Calu3 (cell line): ENCODE measurements at regions of chr12 and their contacts with region 1.

Region 1: GRCh38 chr12:105382771-105383622 is 52.5 kb downstream of the C12orf75 start:
- DNase-seq: peak; percentile 63
- H3K4me3 Mint-ChIP-seq: no peak overlapping the region
- H3K27ac Mint-ChIP-seq: no peak overlapping the region
- H3K4me1 Mint-ChIP-seq: no peaks in the 10 kb centered on the region
- H3K27me3 Mint-ChIP-seq: no peaks in the 10 kb centered on the region
- CTCF ChIP-seq: peak; percentile 54

Region 2: GRCh38 chr12:105171691-105172436 is 211.1 kb before region 1 on chr12:
- CTCF ChIA-PET with region 1: no interaction called
- intact Hi-C with region 1: loop called (anchors 10 kb)
- DNase-seq: no peak
- H3K4me3 Mint-ChIP-seq: no peak overlapping the region
- H3K27ac Mint-ChIP-seq: no peak overlapping the region
- H3K4me1 Mint-ChIP-seq: no peaks in the 10 kb centered on the region
- H3K27me3 Mint-ChIP-seq: no peaks in the 10 kb centered on the region
- CTCF ChIP-seq: no peak

Region 3: DNA sequence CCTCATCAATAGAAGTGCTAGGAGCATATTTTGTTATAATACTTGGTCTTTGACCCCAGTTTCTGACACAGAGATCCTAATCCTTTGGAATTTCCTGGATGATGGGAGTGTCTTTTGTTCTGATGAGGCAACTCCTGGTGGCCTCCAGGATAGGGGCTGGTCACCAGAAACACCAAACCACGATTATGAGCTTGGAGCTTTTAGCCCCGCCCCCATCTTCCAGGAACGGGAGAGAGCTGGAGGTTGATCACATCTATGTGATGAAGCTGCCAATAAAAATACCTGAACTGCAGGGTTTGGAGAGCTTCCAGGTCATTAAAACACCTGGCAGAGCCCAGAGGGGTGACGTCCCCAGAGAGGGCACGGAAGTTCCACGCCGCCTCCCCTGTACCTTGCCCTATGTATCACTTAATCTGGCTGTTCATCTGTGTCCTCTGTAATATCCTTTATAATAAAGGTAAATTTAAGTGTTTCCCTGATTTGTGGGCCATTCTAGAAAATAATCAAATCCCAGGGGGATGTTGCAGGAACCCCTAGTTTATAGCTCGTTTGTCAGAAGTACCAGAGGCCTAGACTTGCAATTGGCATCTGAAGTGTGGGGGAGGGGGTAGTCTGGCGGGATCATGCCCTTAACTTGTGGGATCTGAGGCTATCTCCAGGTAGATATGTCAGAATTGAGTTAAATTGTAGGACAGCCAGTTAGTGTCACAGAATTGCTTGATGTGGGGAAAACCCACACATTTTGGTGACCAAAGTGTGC is 168.2 kb before region 1 on chr12:
- CTCF ChIA-PET with region 1: interaction called, 5 read pairs
- intact Hi-C with region 1: loop called (anchors 1 kb)
- DNase-seq: peak; percentile 90
- H3K4me3 Mint-ChIP-seq: peak overlapping the region; percentile 13
- H3K27ac Mint-ChIP-seq: peak overlapping the region; percentile 68
- H3K4me1 Mint-ChIP-seq: peaks cover 20% of the 10 kb centered on the region
- H3K27me3 Mint-ChIP-seq: no peaks in the 10 kb centered on the region
- CTCF ChIP-seq: no peak

Region 4: GRCh38 chr12:105235732-105236476 is 147.1 kb before region 1 on chr12 and contains the start of gene APPL2:
- CTCF ChIA-PET with region 1: interaction called, 3 read pairs
- intact Hi-C with region 1: loop called (anchors 5 kb)
- DNase-seq: peak; percentile 92
- H3K4me3 Mint-ChIP-seq: peak within 1 kb of the TSS; percentile 80
- H3K27ac Mint-ChIP-seq: peak within 1 kb of the TSS; percentile 72
- H3K4me1 Mint-ChIP-seq: peaks cover 33% of the 10 kb centered on the region
- H3K27me3 Mint-ChIP-seq: no peaks in the 10 kb centered on the region
- CTCF ChIP-seq: peak; percentile 79
- total RNA-seq, gene APPL2: 35.9 and 45.8 TPM in 2 replicates

Region 5: DNA sequence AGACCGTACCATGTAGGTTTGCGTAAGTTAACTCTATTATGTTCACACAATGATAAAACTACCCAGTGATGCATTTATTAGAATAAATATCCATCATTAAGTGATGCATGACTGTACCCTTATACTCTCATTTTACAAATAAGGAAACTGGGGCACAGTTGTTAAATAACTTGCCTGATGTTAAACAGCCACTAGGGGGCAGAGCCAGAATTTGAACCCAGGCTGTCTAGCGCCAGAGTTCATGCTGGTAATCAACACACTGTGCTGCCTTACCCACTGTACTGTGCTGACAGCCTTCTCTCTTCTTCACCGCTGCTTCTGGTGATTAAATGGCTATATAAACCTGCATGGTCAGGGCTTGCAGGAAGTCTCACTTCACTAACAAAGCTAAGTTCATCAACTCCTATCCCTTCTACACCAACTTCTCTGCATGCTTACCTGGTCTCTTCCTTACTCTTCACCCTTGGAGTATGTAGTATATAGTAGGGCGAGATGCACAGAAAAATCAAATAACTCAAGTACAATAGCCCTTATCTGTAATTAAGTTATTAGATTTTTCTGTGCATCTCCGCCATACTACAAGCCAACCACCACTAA is 103.4 kb before region 1 on chr12:
- CTCF ChIA-PET with region 1: no interaction called
- intact Hi-C with region 1: loop called (anchors 1 kb)
- DNase-seq: peak; percentile 48
- H3K4me3 Mint-ChIP-seq: no peak overlapping the region
- H3K27ac Mint-ChIP-seq: no peak overlapping the region
- H3K4me1 Mint-ChIP-seq: peaks cover 47% of the 10 kb centered on the region
- H3K27me3 Mint-ChIP-seq: no peaks in the 10 kb centered on the region
- CTCF ChIP-seq: peak; percentile 69

Region 6: GRCh38 chr12:105317942-105318621 is 64.9 kb before region 1 on chr12:
- CTCF ChIA-PET with region 1: interaction called, 4 read pairs
- intact Hi-C with region 1: loop called (anchors 2 kb)
- DNase-seq: peak; percentile 40
- H3K4me3 Mint-ChIP-seq: peak overlapping the region; percentile 3
- H3K27ac Mint-ChIP-seq: peak overlapping the region; percentile 86
- H3K4me1 Mint-ChIP-seq: peaks cover 68% of the 10 kb centered on the region
- H3K27me3 Mint-ChIP-seq: no peaks in the 10 kb centered on the region
- CTCF ChIP-seq: no peak

Region 7: DNA sequence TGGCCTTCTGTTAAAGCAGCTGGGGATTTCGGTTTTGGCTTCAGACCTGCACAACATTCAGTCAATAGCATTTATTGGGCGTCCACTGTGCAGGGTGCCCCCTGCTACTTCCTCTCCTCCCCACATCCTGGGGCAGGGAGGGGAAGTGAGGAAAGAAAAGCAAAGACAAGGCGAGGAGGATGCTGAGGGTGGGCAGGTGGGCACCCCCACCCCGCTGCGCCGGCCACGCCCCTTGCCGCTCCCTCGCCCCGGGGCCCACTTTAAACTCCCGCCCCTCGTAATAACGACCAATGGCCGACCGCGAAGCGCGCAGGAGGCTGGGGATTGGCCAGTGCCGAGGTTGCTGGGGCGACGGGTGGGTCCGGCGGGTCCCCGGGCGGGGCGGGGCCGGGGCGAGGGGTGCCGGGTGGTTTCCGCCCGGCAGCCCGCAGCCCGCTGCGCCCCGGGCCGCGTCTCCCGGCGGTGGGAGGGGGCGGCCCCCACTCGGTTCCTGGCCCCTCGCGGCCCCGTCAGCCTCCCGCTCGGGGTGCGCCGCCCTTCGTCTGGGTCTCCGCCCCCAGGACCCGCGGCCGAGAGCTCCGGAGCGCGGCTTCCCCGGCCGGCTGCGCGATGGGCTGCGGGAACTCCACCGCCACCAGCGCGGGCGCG is 52.6 kb before region 1 on chr12 and contains the start of gene C12orf75:
- CTCF ChIA-PET with region 1: no interaction called
- intact Hi-C with region 1: loop called (anchors 5 kb)
- DNase-seq: peak; percentile 95
- H3K4me3 Mint-ChIP-seq: peak within 1 kb of the TSS; percentile 78
- H3K27ac Mint-ChIP-seq: peak within 1 kb of the TSS; percentile 92
- H3K4me1 Mint-ChIP-seq: peaks cover 74% of the 10 kb centered on the region
- H3K27me3 Mint-ChIP-seq: no peaks in the 10 kb centered on the region
- CTCF ChIP-seq: no peak
- total RNA-seq, gene C12orf75: 336 and 363 TPM in 2 replicates

Region 8: DNA sequence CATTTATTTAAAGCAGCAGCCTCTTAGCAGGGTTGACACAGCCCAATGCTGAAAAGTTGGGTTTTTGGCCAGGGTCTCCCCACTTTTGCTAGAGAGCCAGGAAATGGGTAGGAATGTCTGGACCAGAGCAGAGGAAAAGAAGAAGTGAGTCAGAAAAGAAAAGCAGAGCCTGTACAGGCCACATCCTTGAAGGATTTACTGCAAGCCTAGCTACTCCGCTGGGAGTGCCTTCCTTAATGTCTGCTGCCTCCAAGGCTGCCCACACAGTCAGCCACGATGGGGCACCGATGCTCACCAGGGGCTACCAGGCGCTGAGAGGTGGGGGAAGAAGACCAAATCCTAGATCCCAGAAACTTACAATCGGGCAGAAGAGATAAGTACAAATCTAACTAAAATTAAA is 86.7 kb after region 1 on chr12:
- CTCF ChIA-PET with region 1: no interaction called
- intact Hi-C with region 1: no loop called
- DNase-seq: no peak
- H3K4me3 Mint-ChIP-seq: no peak overlapping the region
- H3K27ac Mint-ChIP-seq: no peak overlapping the region
- H3K4me1 Mint-ChIP-seq: peaks cover 9% of the 10 kb centered on the region
- H3K27me3 Mint-ChIP-seq: peaks cover 25% of the 10 kb centered on the region
- CTCF ChIP-seq: no peak